IMR-90 (cell line): ENCODE measurements at regions of chr4 and their contacts with region 1.

Region 1: DNA sequence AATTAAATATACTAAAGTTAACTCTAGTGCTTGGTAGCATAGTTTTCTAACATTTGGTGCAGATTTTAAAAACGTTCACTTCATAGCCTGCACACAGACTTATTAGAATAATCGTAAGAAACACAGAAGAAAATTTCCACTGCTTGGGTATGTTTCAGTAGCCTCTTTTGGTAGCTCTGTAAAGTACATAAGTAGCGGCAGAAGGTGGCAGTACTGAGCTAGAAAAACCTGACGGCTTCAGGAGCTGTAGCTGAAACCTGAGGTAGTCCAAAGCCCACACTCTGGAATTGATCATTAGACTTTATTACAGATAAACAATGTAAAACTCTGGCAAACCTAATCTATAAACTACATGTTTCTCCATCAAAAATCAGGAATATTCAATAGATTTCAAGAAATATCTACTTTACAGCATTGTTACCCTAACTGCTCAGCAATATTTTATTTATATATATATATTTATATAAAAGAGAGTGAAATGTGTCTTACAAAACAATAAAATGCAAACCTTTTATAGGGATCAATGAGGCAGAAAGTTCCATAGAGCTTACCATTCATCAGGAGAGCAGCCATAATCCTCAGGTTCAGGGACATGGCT is 88.2 kb downstream of the ATP8A1 start:
- DNase-seq: peak; percentile 65
- ATAC-seq: peak; percentile 86
- H3K4me3 ChIP-seq: no peak overlapping the region
- H3K27ac ChIP-seq: no peak overlapping the region
- H3K4me1 ChIP-seq: no peaks in the 10 kb centered on the region
- H3K27me3 ChIP-seq: no peaks in the 10 kb centered on the region
- CTCF ChIP-seq: peak; percentile 71
- POLR2A ChIP-seq: no peak
- RAD21 ChIP-seq: peak; percentile 69

Region 2: DNA sequence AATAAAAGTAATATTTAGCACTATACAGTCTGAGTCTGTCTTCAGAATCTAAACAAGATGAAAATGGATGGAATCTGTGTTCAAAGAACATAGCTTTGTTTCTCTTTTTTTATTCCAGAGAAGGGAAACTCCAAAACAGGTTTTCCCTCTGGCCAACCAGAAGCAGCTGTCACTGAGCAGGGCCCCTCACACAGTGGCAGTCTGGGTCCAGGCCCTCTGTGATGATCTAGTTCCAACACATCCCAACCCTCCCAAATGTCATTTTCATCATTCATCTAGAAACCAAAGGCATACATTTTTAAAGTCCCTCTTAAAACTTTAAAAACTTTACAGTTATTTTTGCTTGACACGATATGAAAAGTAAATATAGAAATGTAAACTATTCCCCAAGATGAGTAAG is 18.1 kb after region 1 on chr4:
- CTCF ChIA-PET with region 1: no interaction called
- POLR2A ChIA-PET with region 1: no interaction called
- dilution Hi-C with region 1: no loop called
- in situ Hi-C with region 1: no loop called
- intact Hi-C with region 1: no loop called
- DNase-seq: no peak
- ATAC-seq: no peak
- H3K4me3 ChIP-seq: no peak overlapping the region
- H3K27ac ChIP-seq: no peak overlapping the region
- H3K4me1 ChIP-seq: no peaks in the 10 kb centered on the region
- H3K27me3 ChIP-seq: no peaks in the 10 kb centered on the region
- CTCF ChIP-seq: no peak
- POLR2A ChIP-seq: no peak
- RAD21 ChIP-seq: no peak

Region 3: DNA sequence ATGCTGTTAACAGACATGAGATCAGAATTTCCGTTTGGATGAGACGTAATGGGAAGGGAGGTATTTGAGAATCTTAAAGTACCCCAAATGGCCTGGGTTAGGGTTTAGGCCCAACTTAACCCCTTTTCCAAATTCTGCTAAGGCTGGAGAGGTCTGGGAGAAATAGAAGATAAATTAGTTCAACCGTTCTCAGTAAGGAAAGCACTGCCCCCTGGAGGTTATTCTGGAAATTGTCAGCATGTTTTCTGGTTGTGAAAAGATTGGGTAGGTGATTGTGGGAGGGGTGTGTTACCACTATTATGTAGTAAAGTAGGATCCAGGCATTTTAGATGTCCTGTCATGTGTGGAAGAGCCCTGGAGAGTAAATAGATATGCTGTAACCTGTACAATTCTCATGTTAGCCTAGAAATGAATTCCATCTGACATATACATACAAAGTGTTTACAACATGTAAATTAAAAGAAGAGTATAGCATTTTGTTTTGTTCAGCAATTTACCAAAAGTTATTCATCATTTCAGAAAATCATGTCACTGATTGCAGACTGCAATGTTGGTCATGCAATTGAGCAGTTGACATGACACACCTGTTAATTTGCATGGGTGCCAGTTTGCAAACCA is 297.0 kb after region 1 on chr4:
- CTCF ChIA-PET with region 1: interaction called, 5 read pairs
- POLR2A ChIA-PET with region 1: no interaction called
- dilution Hi-C with region 1: no loop called
- in situ Hi-C with region 1: loop called (anchors 5 kb)
- intact Hi-C with region 1: loop called (anchors 1 kb)
- DNase-seq: peak; percentile 36
- ATAC-seq: peak; percentile 63
- H3K4me3 ChIP-seq: no peak overlapping the region
- H3K27ac ChIP-seq: no peak overlapping the region
- H3K4me1 ChIP-seq: no peaks in the 10 kb centered on the region
- H3K27me3 ChIP-seq: no peaks in the 10 kb centered on the region
- CTCF ChIP-seq: peak; percentile 64
- POLR2A ChIP-seq: no peak
- RAD21 ChIP-seq: peak; percentile 59